Heart left ventricle (tissue), 16 donors: ENCODE measurements at regions of chr2 and their contacts with region 1.

Region 1: GRCh38 chr2:119476301-119477021 is 44.8 kb downstream of the TMEM37 start:
- DNase-seq: peak in 4 of 5 donors; percentile 45 to 65 (median 60)
- ATAC-seq: peak; percentile 40 to 78 (median 69)
- H3K4me3 ChIP-seq: no peak overlapping the region
- H3K27ac ChIP-seq: peak overlapping the region in 3 of 12 donors; percentile 48 to 67 (median 51)
- H3K4me1 ChIP-seq: peaks cover 0 to 41% (median 14%) of the 10 kb centered on the region in 12 donors
- H3K27me3 ChIP-seq: no peaks in the 10 kb centered on the region
- CTCF ChIP-seq: peak; percentile 85 to 99 (median 96)
- POLR2A ChIP-seq: no peak

Region 2: DNA sequence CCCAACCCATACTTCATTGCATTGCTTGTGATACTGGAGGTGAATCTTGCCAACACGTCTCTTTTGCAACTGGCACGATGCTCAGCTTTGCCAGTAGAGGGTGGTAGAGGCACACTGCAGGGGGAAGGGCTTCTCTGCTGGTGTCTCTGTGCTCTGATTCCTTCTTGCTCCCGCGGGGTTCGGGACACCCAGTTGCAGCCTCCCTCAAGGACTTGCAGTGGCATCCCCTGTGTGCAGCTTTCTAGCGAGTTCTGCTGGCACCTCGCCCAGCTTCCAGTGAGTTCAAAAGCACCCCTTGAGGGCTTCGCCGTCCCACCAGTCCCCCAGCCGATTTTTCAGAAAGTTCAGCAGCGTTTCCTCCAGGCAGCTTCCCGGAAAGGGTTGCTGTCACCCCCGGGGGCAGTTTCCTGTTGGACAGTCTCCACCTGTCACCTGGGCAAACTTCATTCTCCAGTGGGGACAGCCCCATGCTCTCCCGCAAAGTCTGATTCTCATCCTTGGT is 593.7 kb before region 1 on chr2:
- intact Hi-C with region 1: loop called in 3 of 10 experiments (anchors 5 to 10 kb)
- DNase-seq: peak; percentile 26 to 70 (median 56)
- ATAC-seq: peak in 3 of 4 donors; percentile 83 to 88 (median 85)
- H3K4me3 ChIP-seq: peak overlapping the region in 4 of 12 donors; percentile 9 to 48 (median 22)
- H3K27ac ChIP-seq: no peak overlapping the region
- H3K4me1 ChIP-seq: peaks cover 0 to 6% (median 0%) of the 10 kb centered on the region in 12 donors
- H3K27me3 ChIP-seq: peaks cover 0 to 52% (median 13%) of the 10 kb centered on the region in 9 donors
- CTCF ChIP-seq: peak; percentile 64 to 91 (median 76)
- POLR2A ChIP-seq: no peak

Region 3: GRCh38 chr2:119218478-119219064 is 257.9 kb before region 1 on chr2:
- intact Hi-C with region 1: loop called in 2 of 10 experiments (anchors 2 kb)
- DNase-seq: peak; percentile 23 to 64 (median 51)
- ATAC-seq: peak in 3 of 4 donors; percentile 49 to 56 (median 50)
- H3K4me3 ChIP-seq: no peak overlapping the region
- H3K27ac ChIP-seq: no peak overlapping the region
- H3K4me1 ChIP-seq: peaks cover 0 to 16% (median 4%) of the 10 kb centered on the region in 12 donors
- H3K27me3 ChIP-seq: no peaks in the 10 kb centered on the region
- CTCF ChIP-seq: peak; percentile 8 to 61 (median 48)
- POLR2A ChIP-seq: no peak

Region 4: GRCh38 chr2:119290859-119291587 is 185.4 kb before region 1 on chr2:
- intact Hi-C with region 1: loop called in 1 of 10 experiments (anchors 10 kb)
- DNase-seq: peak; percentile 68 to 93 (median 89)
- ATAC-seq: peak; percentile 29 to 95 (median 90)
- H3K4me3 ChIP-seq: no peak overlapping the region
- H3K27ac ChIP-seq: no peak overlapping the region
- H3K4me1 ChIP-seq: peaks cover 0 to 15% (median 7%) of the 10 kb centered on the region in 12 donors
- H3K27me3 ChIP-seq: no peaks in the 10 kb centered on the region
- CTCF ChIP-seq: peak; percentile 49 to 97 (median 92)
- POLR2A ChIP-seq: no peak

Region 5: GRCh38 chr2:119311356-119311755 is 165.1 kb before region 1 on chr2:
- intact Hi-C with region 1: loop called in 7 of 10 experiments (anchors 5 to 10 kb)
- DNase-seq: no peak
- ATAC-seq: peak in 3 of 4 donors; percentile 12 to 24 (median 23)
- H3K4me3 ChIP-seq: no peak overlapping the region
- H3K27ac ChIP-seq: peak overlapping the region in 1 of 12 donors; percentile 31
- H3K4me1 ChIP-seq: peaks cover 0 to 30% (median 14%) of the 10 kb centered on the region in 12 donors
- H3K27me3 ChIP-seq: no peaks in the 10 kb centered on the region
- CTCF ChIP-seq: no peak
- POLR2A ChIP-seq: no peak

Region 6: DNA sequence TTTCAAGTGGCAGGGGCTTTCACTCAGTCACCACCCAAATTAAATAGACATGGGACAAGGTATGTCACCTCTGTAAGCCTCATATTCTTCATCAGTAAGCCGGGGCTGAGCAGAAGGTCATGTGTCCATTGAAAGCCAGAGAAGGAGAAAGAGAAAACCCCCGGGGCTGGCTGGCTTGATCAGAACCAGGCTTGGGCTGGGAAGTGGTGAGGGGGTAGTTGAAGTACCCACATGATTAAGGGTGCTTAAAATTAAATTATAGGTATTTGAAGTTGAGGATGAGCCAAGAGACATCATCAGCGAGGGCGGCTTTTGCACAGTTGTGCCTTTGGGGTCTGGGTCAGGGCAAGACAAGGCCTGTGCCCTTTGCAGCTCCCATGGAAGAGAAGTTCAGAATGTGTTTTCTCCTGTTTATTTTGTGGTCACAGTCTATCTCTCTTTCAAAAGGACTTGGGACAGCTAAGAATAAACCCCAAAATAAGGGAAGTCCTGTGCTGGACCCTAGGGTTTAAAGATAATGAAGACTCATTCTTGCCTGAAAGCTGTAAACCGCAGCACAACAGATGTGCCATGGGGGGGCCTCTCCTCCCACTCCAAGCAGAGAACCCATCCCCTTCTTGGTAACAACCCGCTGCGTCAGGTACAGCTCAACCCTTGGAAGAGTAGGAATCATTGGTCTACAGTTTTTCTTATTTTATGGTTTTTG is 99.0 kb before region 1 on chr2:
- intact Hi-C with region 1: no loop called
- DNase-seq: no peak
- ATAC-seq: no peak
- H3K4me3 ChIP-seq: no peak overlapping the region
- H3K27ac ChIP-seq: no peak overlapping the region
- H3K4me1 ChIP-seq: no peaks in the 10 kb centered on the region
- H3K27me3 ChIP-seq: no peaks in the 10 kb centered on the region
- CTCF ChIP-seq: no peak
- POLR2A ChIP-seq: no peak

Region 7: GRCh38 chr2:119523952-119524694 is 47.7 kb after region 1 on chr2 and contains the start of gene SCTR:
- intact Hi-C with region 1: no loop called
- DNase-seq: peak in 1 of 5 donors; percentile 24
- ATAC-seq: peak in 3 of 4 donors; percentile 32 to 59 (median 49)
- H3K4me3 ChIP-seq: peak within 1 kb of the TSS in 8 of 12 donors; percentile 7 to 39 (median 19)
- H3K27ac ChIP-seq: no peak within 1 kb of the TSS
- H3K4me1 ChIP-seq: peaks cover 0 to 16% (median 0%) of the 10 kb centered on the region in 12 donors
- H3K27me3 ChIP-seq: peaks cover 5 to 48% (median 19%) of the 10 kb centered on the region in 9 donors
- CTCF ChIP-seq: no peak
- POLR2A ChIP-seq: no peak
- total RNA-seq, gene SCTR: 0.28 to 2.2 (median 0.44) TPM in 8 of 9 donors, not detected in the other